ENCODE measurements at regions of chr17 and their contacts with region 1.

Region 1: DNA sequence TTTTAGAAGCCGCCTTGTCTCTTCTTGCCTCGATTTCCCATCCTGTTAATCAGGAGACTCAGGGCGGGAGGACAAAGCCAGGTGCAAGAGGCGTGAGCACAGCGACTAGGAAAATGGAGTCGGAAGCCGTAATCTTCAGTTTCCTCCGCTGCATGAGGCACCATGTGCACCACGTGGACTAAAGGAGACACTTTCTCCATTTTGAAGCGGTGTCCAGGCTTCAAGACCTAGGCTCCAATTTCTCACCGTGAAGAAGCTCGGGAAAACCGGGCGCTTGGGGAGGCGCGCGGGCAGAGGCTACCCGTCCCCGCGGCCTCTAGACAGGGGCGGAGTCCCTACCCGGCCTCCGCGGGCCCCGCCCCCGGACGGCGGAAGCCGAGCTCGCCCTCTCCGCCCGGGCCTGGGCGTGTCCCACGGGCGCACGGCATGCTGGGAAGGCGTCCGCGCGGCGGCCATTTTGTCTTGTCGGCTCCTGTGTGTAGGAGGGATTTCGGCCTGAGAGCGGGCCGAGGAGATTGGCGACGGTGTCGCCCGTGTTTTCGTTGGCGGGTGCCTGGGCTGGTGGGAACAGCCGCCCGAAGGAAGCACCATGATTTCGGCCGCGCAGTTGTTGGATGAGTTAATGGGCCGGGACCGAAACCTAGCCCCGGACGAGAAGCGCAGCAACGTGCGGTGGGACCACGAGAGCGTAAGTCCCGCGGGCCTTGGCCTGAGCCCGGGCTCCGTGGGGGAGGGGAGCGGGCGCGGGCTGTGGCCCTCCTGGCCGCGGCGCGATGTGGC is at the start of gene LUC7L3:
- DNase-seq: peak; percentile 99 to 100
- H3K4me3 ChIP-seq: peak within 1 kb of the TSS; percentile 88
- H3K4me3 Mint-ChIP-seq: peak within 1 kb of the TSS; percentile 97
- H3K27ac Mint-ChIP-seq: peak within 1 kb of the TSS; percentile 100
- H3K4me1 ChIP-seq: peaks cover 23% of the 10 kb centered on the region
- H3K4me1 Mint-ChIP-seq: peaks cover 18% of the 10 kb centered on the region
- H3K27me3 ChIP-seq: no peaks in the 10 kb centered on the region
- H3K27me3 Mint-ChIP-seq: no peaks in the 10 kb centered on the region
- CTCF ChIP-seq: no peak
- total RNA-seq, gene LUC7L3: 284 and 287 TPM in 2 replicates

Region 2: DNA sequence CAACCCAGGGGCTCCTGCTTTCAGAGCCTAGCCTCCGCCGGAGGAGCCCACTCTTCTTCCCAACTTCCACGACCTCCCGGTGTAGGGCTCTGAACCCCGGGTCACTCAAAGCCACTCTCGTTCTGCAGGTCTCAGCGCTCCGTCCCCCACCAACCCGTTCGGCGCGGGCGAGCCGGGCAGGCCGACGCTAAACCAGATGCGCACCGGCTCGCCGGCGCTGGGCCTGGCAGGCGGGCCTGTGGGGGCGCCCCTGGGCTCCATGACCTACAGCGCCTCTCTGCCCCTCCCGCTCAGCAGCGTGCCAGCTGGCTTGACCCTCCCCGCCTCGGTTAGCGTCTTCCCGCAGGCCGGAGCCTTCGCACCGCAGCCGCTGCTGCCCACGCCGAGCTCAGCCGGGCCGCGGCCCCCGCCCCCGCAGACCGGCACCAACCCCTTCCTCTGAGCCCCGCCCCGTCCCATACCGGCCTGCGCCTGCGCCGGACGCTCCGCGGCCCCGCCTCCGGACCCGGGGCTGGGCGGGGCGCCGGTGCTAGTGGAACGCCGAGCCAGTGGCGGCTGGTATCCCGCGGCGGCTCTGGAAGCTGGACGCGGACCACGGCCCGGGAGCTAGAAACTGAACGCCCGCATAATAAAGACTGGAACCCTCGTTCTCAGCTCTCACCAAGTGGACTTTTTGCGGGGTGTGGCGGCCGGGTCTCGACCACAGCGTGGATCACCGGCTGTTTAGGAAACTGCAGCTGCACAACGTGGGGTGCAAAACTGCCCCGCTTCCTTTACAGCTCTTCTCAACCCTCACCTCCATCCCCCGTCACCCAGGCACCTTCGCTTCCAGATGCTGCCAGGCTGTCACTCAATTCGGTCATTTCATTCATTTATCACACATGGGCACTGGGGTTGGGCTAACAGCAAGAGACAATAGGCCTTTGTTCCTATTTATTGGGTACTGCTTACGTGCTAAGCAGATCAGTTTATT is 177.3 kb before region 1 on chr17:
- CTCF ChIA-PET with region 1: interaction called, 3 read pairs
- POLR2A ChIA-PET with region 1: interaction called, 11 read pairs
- intact Hi-C with region 1: no loop called
- DNase-seq: peak; percentile 94 to 100
- H3K4me3 ChIP-seq: peak overlapping the region; percentile 45
- H3K4me3 Mint-ChIP-seq: peak overlapping the region; percentile 77
- H3K27ac Mint-ChIP-seq: peak overlapping the region; percentile 39
- H3K4me1 ChIP-seq: peaks cover 66% of the 10 kb centered on the region
- H3K4me1 Mint-ChIP-seq: peaks cover 69% of the 10 kb centered on the region
- H3K27me3 ChIP-seq: no peaks in the 10 kb centered on the region
- H3K27me3 Mint-ChIP-seq: no peaks in the 10 kb centered on the region
- CTCF ChIP-seq: peak; percentile 41 to 57

Region 3: DNA sequence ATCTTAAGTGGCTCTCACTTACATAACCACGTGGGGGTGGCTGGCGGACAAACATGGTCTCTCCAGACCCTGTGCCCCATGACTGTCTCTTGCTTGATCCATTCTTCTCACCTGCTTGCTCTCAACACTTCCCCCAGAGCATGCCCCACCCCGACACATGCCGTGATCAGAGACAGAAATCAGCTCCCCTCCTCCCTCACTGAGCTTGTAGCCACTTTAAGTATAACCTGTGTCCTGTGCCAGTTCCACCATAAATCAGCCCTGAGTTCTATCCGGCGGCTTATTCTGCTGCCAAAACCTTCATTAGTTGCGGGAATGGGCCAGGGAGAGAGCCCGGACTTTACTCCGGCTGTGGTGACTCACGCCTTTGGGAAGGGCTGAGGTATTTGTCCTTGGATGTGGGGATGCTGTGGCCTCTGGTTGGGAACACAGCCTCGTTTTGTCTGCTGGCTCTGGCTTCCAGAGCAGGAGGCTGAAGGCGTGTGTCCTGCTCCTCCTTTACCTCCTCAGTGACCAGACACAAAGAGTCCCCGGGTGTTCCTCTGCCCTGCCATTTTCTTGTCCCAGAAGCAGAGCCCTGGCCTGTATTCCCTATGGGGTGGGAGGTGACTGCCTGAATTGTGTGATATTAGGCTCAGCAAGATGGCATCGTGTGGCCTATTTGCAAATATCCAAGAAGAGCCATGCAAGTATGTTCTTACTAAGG is 32.7 kb before region 1 on chr17:
- CTCF ChIA-PET with region 1: no interaction called
- POLR2A ChIA-PET with region 1: interaction called, 13 read pairs
- intact Hi-C with region 1: no loop called
- DNase-seq: peak; percentile 94 to 98
- H3K4me3 ChIP-seq: peak overlapping the region; percentile 38
- H3K4me3 Mint-ChIP-seq: peak overlapping the region; percentile 77
- H3K27ac Mint-ChIP-seq: peak overlapping the region; percentile 96
- H3K4me1 ChIP-seq: peaks cover 91% of the 10 kb centered on the region
- H3K4me1 Mint-ChIP-seq: peaks cover 70% of the 10 kb centered on the region
- H3K27me3 ChIP-seq: no peaks in the 10 kb centered on the region
- H3K27me3 Mint-ChIP-seq: no peaks in the 10 kb centered on the region
- CTCF ChIP-seq: no peak

Region 4: GRCh38 chr17:50707289-50708049 is 11.9 kb before region 1 on chr17 and contains the start of gene ANKRD40:
- CTCF ChIA-PET with region 1: interaction called, 4 read pairs
- POLR2A ChIA-PET with region 1: interaction called, 20 read pairs
- intact Hi-C with region 1: loop called (anchors 1 kb)
- DNase-seq: peak; percentile 95 to 99
- H3K4me3 ChIP-seq: peak within 1 kb of the TSS; percentile 68
- H3K4me3 Mint-ChIP-seq: peak within 1 kb of the TSS; percentile 97
- H3K27ac Mint-ChIP-seq: peak within 1 kb of the TSS; percentile 79
- H3K4me1 ChIP-seq: peaks cover 15% of the 10 kb centered on the region
- H3K4me1 Mint-ChIP-seq: peaks cover 31% of the 10 kb centered on the region
- H3K27me3 ChIP-seq: no peaks in the 10 kb centered on the region
- H3K27me3 Mint-ChIP-seq: no peaks in the 10 kb centered on the region
- CTCF ChIP-seq: no peak
- total RNA-seq, gene ANKRD40: 113 and 114 TPM in 2 replicates

Region 5: DNA sequence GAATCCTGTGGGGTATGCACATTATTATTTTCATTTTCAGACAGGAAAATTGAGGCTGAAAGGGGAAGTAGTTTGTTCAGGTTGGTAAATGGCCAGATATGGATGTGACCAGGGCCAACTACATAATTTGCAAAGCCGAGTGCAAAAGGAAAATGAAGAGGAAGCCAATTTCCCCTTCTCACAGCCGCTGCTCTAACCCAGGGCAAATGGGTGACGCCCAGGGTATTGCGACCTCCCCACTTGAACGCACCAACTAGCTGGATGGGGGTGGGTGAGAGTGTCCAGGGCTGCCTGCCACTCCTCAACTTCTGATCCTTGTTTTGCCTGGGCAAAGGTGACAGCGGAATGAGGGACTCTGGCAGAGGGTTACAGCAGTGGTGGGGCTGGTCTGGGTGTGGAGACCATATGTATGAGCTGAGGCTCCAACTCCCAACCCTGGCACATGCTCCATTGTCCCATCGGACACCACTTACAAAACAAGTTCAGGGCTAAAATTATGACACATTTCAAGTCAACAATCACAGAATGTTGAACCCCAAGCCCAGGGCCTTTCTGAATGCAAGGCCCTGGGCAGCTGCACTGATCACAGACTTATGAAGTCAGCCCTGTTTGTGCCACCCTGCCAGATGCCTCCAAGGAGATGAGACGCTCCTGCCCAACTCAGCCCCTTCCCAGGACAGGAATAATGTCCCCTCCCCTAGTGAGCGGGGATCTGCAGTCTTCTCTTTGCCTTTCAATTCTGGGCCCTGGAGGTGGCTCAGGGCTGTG is 46.3 kb after region 1 on chr17:
- CTCF ChIA-PET with region 1: interaction called, 3 read pairs
- POLR2A ChIA-PET with region 1: interaction called, 9 read pairs
- intact Hi-C with region 1: loop called (anchors 2 kb)
- DNase-seq: peak in 1 of 2 experiments; percentile 47
- H3K4me3 ChIP-seq: no peak overlapping the region; the same call in 1 of the 2 replicates
- H3K4me3 Mint-ChIP-seq: peak overlapping the region; percentile 25
- H3K27ac Mint-ChIP-seq: peak overlapping the region; percentile 81
- H3K4me1 ChIP-seq: peaks cover 67% of the 10 kb centered on the region
- H3K4me1 Mint-ChIP-seq: peaks cover 55% of the 10 kb centered on the region
- H3K27me3 ChIP-seq: no peaks in the 10 kb centered on the region
- H3K27me3 Mint-ChIP-seq: no peaks in the 10 kb centered on the region
- CTCF ChIP-seq: no peak

Region 6: DNA sequence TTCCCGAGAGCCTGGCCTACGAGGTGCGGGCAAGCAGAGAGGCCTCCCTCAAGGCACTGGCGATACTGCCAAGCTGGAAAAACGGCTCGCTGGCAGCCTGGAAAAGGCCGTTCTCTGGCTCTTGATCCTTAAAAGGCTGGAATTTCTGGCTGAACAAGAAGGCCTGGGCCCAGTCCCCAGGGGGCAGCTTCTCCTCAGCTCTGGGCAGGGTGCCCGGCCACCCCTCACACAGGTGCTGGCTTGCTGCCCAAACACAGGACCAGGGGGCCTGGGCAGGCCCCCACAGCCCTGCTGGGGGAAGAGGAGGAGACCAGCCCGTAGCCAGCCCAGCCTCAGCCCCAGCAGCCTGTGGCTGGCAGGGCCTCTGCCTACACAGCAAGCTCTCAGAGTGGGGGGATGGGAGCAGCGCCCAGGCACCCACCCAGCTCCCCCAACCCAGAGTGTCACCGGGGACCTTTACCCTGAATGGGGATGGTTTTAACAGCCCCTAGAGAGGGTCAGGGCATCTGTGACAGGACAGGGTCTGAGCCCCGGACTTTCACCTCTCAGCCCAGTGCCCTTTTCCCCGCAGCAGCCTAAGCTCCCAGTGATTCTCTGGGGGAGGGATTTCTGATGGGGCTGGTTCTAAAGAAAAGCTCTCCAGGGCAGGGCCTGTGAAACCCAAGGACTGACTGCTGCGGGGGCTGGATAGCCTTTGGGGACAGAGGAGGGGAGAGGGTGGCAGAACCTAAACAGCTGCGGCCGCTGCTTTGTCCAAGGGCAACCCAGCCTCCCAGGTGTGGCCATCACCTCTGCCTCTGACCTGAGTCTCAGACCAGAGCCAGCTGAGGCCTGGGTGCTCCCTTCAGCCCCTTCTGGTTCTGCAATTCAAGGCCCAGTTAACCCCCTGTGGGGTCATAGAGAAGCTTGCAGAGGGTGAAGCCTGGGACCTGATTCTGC is 185.5 kb after region 1 on chr17:
- CTCF ChIA-PET with region 1: no interaction called
- POLR2A ChIA-PET with region 1: no interaction called
- intact Hi-C with region 1: no loop called
- DNase-seq: peak; percentile 83 to 86
- H3K4me3 ChIP-seq: peak overlapping the region; percentile 11
- H3K4me3 Mint-ChIP-seq: peak overlapping the region; percentile 51
- H3K27ac Mint-ChIP-seq: peak overlapping the region; percentile 87
- H3K4me1 ChIP-seq: peaks cover 48% of the 10 kb centered on the region
- H3K4me1 Mint-ChIP-seq: peaks cover 46% of the 10 kb centered on the region
- H3K27me3 ChIP-seq: no peaks in the 10 kb centered on the region
- H3K27me3 Mint-ChIP-seq: no peaks in the 10 kb centered on the region
- CTCF ChIP-seq: peak; percentile 1 to 26

Measured in Caco-2 (cell line).